AG04449 (cell line): ENCODE measurements at regions of chr21 and their contacts with region 1.

Region 1: GRCh38 chr21:26842976-26843932 is 2.0 kb downstream of the ADAMTS1 start:
- DNase-seq: peak; percentile 84
- H3K4me3 ChIP-seq: peak overlapping the region; percentile 98
- CTCF ChIP-seq: peak; percentile 59

Region 2: DNA sequence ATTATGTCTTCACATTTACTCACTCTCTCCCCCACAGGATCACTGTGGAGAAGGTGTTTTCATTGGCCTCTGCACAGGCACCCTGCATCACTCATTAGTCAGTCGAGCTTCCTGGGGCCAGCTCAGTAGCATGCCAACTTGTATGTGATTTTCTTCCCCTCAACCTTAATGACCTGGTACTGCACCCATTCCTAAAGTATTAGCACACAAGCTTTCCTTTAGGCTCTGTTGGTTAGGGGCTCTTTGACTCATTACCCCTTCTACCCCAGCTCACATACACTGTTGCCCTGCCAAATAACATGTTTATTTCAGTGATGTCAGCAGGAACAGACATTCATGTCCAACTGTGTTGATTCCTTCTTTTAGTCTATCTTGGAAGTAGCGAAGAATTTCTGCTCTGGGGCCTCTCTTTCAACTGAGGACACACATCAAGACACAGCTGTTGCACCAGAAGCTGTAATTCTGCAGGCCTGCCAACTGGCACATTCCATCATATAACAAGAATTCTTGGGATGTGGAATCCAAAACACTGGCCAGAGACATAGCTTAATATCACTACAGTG is 727.1 kb after region 1 on chr21:
- CTCF ChIA-PET with region 1: interaction called, 7 read pairs
- POLR2A ChIA-PET with region 1: interaction called, 13 read pairs
- DNase-seq: peak; percentile 92
- H3K4me3 ChIP-seq: no peak overlapping the region
- CTCF ChIP-seq: no peak